ENCODE measurements at regions of chr13 and their contacts with region 1.

Region 1: DNA sequence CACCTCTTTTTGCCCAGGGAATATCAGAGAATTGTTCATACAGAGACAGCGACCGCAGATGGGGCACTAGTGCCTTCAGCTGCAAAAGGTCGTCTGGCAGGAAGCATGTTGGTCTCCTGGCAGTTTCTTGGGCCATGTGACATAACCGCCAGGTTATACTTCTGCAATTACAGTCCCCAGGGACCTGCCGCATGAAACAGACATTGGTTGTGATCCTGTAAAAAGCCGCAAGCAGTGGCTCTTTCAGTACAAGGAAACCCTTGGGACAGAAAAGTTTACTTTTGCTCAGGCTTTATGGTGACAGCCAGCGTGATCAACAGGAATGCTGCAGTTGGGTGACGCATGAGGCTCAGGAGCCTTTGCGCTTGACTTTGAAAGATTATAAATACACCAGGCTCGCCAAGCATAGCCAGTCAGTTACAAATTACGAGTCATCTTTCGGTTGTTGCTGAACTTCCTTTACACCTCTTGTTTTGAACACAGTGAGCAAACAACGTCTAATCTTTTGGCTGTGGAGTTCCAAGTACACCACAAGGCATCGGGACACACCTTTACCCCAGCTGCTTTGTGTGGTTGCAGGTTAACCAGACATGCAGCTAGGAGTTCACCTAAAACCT is 50.5 kb upstream of the UBE2L5 start:
- DNase-seq: peak; percentile 65
- H3K4me3 Mint-ChIP-seq: peak overlapping the region; percentile 68
- H3K27ac Mint-ChIP-seq: peak overlapping the region; percentile 84
- H3K4me1 Mint-ChIP-seq: peaks cover 80% of the 10 kb centered on the region
- H3K27me3 Mint-ChIP-seq: no peaks in the 10 kb centered on the region

Region 2: DNA sequence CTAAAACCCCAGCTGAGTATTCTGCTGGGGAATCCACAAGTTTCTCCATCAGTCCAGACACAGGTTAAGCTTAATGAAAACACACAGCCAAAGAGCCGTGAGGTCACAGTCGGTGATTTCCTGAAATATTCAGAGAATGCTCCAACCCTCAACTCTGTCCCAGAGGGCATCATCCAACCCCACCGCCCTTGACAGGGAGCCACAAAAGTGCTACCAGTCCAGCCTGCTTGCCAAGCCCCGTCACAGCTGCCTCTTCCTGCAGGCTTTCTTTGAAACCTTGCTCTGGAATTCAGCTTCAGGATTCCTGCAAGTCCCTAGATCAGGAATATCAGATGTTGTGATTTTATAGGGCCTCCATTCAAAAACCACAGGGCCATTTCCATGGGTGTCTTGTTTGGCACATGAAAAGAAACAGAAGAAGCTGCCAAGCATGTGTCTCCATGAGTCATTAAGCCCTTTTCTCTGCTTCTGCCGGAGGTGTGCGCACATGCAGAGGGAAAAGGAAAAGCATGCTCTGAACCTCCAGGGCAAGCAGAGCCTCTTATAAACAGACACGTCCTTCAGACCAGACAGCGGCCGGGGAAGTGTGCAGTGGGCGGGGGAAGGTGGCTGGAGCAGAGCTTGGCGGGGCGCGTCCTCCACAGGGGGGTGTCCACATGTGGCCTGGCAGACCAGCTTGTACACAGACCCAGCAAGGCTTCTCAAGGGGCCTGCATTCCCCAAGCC is 229.1 kb before region 1 on chr13:
- intact Hi-C with region 1: loop called (anchors 1 kb)
- DNase-seq: peak; percentile 28
- H3K4me3 Mint-ChIP-seq: peak overlapping the region; percentile 31
- H3K27ac Mint-ChIP-seq: peak overlapping the region; percentile 86
- H3K4me1 Mint-ChIP-seq: peaks cover 61% of the 10 kb centered on the region
- H3K27me3 Mint-ChIP-seq: peaks cover 4% of the 10 kb centered on the region

Region 3: DNA sequence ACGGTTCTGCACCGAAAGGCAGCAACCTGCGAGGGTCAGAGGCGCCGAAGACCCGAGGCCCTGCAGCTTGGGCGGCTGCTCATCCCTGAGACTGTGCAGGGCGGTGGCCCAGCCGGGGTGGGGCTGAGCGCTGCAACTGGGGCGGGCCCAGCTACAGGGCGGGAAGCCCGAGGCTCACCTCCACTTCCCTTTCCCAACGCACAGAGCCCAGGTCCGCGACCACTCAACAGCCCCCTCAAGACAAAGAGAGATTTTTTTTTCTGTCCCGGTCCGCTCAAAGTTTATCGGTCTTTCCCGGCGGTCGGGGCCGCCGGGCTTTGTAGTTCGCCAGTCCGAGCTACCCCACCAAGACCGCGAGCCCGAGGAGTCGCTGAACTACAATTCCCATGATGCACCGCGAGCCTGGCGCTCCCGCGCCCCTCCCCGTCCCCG is 65.0 kb before region 1 on chr13:
- intact Hi-C with region 1: loop called (anchors 2 kb)
- DNase-seq: peak; percentile 90
- H3K4me3 Mint-ChIP-seq: peak overlapping the region; percentile 88
- H3K27ac Mint-ChIP-seq: peak overlapping the region; percentile 84
- H3K4me1 Mint-ChIP-seq: peaks cover 65% of the 10 kb centered on the region
- H3K27me3 Mint-ChIP-seq: no peaks in the 10 kb centered on the region

Region 4: GRCh38 chr13:30360586-30360985 is 11.2 kb before region 1 on chr13:
- intact Hi-C with region 1: no loop called
- DNase-seq: no peak
- H3K4me3 Mint-ChIP-seq: no peak overlapping the region
- H3K27ac Mint-ChIP-seq: no peak overlapping the region
- H3K4me1 Mint-ChIP-seq: peaks cover 10% of the 10 kb centered on the region
- H3K27me3 Mint-ChIP-seq: no peaks in the 10 kb centered on the region

Region 5: DNA sequence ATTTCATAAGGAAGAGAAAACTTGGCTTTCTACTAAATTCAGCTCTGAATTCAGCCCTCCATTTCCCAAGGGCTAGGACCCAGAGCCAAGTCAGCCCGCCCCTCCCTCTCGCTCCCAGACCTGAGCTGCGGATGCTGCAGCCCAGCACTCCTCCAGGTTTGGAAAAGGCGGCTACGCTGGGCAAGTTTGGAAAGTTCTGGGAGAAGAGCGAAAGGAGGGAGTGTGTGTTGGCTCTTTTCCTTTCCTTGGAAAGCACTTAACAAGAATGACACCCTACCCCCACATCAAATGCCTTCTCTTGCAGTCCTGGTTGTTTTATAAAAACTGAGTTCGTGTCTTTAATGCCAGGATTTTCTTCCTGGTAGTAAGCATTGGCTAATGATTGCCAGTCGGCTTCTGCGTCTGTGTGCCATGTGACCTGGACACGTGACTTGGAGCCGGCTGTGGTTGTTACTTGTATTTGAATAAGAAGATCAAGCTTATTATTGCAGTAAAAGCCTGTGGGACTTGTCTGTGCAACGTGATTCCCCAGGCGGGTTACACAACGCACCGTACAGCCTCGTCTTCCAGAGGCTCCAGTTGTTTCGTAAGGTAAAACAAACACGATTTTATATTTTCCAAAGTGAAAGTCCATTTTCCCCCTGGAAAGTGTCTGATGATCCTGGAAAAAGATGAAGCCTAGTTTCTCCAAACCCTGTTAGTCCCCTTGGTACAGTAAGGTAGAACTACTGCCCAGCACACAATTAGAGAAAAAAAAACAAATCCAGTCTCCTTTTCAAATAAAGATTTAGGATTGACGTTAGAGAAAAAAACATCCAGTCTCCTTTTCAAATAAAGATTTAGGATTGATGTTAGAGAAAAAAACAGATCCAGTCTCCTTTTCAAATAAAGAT is 23.7 kb after region 1 on chr13:
- intact Hi-C with region 1: loop called (anchors 1 kb)
- DNase-seq: peak; percentile 52
- H3K4me3 Mint-ChIP-seq: peak overlapping the region; percentile 84
- H3K27ac Mint-ChIP-seq: peak overlapping the region; percentile 95
- H3K4me1 Mint-ChIP-seq: peaks cover 53% of the 10 kb centered on the region
- H3K27me3 Mint-ChIP-seq: no peaks in the 10 kb centered on the region

Region 6: DNA sequence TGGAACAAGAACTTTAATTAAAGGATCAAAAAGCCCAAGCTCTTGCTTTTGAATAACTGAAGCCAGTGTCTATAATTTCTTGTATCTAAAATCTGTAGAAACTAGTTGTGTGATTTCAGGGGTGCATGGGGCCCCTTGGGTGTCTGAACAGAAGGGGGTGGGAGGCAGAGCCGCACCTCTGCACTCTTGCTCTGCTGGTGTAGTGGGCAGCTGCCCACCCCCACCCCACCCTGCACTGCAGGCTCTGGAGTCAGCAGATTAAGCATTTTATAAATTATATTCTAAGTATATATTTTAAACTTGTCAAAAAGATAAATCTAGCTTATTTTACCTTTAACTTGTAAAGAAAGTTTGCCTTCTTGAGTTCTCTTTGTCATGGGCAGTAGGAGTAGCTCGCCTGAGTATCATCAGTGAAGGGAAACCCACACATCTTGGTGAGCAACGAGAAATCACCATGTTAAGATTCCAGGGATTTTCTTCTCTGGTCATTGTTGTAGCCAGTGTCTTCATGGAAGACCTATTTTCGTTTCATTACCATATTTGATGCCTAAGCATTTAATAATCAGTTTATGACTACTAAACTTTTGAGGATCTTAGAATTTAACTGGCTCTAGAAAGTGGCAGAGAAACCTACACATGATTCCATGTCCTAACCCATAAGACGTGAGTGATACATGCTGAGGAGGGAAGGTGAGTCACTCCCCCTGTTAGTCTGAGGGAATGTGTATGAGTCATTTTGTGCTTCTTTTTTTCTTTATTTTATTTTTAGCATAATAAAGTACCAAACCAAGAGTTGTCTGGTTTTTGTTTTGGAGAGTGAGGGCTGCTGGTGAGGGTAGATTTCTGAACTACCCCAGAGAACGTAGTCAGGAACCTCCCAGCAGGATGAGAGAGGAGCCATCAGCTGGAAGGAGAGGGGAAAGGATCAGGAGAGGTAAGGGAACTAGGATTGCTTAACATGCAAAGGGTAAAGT is 58.3 kb after region 1 on chr13:
- intact Hi-C with region 1: loop called (anchors 1 kb)
- DNase-seq: no peak
- H3K4me3 Mint-ChIP-seq: peak overlapping the region; percentile 75
- H3K27ac Mint-ChIP-seq: peak overlapping the region; percentile 97
- H3K4me1 Mint-ChIP-seq: peaks cover 29% of the 10 kb centered on the region
- H3K27me3 Mint-ChIP-seq: peaks cover 6% of the 10 kb centered on the region

Region 7: GRCh38 chr13:30617315-30618185 is 245.8 kb after region 1 on chr13 and contains the start of gene USPL1:
- intact Hi-C with region 1: loop called (anchors 1 kb)
- DNase-seq: peak; percentile 99
- H3K4me3 Mint-ChIP-seq: no peak within 1 kb of the TSS
- H3K27ac Mint-ChIP-seq: no peak within 1 kb of the TSS
- H3K4me1 Mint-ChIP-seq: peaks cover 12% of the 10 kb centered on the region
- H3K27me3 Mint-ChIP-seq: no peaks in the 10 kb centered on the region
- total RNA-seq, gene USPL1: 17.2 and 17.5 TPM in 2 replicates